Adrenal gland (tissue), 19 donors: ENCODE measurements at regions of chr22 and their contacts with region 1.

Region 1: DNA sequence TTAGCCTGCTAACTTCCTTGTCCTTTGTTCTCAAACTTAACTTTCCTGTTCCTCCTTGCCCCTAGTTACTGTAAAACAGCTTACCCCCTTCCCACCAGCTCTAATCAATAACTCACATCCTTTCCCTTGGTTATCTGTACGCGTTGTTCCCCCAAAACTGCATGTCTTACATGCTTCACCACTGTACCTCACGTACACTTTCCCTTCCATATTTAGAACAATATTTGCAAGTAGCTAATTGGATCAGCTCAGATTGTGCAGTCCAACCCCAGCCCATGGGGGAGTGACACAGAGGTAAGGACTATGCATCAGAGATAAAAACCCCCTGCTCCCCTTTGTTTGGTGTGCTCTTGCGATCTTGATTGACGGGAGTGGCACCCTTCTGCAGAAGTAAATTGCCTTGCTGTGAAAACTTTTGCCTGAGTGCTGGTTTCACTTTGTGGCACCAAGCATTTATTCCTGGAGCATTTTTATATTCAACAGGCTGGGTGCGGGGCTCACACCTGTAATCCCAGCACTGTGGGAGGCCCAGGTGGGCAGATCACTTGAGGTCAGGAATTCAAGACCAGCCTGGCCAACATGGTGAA is 30.9 kb downstream of the MIF start:
- DNase-seq: peak in 1 of 7 donors; percentile 13
- H3K4me3 ChIP-seq: no peak overlapping the region
- H3K27ac ChIP-seq: no peak overlapping the region
- H3K4me1 ChIP-seq: peaks cover 0 to 3% of the 10 kb centered on the region in 2 donors
- H3K27me3 ChIP-seq: no peaks in the 10 kb centered on the region
- CTCF ChIP-seq: no peak
- POLR2A ChIP-seq: no peak

Region 2: DNA sequence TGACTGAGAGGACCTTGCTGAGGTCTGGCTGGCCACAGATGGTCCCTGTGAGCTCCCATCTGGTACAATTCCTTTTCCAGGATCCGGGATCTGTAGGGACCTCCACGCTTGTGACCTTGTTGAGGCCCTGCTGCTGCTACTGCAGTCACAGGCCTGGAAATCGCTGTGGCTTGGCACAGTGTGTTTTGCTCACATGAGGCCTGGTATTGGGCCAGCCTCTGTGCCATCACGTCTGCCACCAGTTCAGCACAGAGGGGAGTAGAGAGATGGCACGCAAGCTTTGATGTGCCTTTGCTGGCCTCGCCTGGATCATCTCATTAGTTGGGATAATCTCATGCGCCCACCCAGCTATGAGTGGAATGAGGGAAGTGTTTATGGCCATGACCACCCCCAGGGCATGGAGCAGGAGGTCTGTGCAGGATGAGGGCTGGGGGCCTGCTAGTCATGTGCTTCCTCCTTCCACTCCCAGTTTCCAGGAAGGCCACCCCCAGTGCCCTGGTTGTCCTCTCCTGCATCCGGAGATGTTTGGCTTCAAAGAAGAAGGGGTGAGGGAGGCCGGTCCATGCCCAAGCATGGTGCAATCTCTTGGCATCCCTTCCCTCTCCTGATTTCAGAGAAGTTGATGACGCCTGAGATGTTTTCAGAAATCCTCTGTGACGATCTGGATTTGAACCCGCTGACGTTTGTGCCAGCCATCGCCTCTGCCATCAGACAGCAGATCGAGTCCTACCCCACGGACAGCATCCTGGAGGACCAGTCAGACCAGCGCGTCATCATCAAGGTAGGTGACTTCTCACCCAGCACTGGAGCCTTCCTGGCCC is 108.7 kb before region 1 on chr22:
- intact Hi-C with region 1: no loop called
- DNase-seq: peak in 1 of 7 donors; percentile 48
- H3K4me3 ChIP-seq: no peak overlapping the region
- H3K27ac ChIP-seq: no peak overlapping the region
- H3K4me1 ChIP-seq: peaks cover 0 to 13% of the 10 kb centered on the region in 2 donors
- H3K27me3 ChIP-seq: no peaks in the 10 kb centered on the region
- CTCF ChIP-seq: no peak
- POLR2A ChIP-seq: no peak

Region 3: DNA sequence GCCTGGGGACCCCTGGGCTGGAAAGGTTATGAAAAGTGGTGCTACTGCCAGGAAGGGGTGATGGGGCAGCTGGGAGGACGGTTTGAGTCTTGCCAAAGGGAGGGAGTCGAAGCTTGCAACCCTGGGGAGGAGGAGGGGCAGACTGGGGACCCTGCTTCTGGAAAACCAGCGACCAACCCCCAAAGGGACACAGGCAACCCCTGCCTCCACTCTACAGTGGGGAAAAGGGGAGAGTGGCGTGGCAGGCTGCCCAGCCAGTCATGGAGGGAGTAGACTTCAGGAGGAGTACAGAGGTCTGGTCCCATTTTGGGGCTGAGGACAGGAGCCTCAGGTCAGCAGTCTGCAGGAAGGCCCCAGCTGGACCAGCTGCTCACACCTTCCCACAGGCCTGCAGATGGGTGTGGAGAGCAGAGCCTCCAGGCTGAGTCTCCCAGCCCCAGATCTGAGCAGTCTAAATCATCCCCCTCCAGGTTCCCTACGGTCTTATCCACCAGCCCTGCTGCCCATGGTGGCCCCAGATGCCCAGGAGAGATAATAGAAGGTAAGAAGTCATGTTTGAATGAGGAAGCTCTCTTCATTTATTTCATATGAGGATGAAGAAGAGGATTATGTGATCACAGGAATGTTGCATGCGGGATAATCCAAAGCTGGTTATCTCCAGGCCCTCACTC is 45.8 kb after region 1 on chr22:
- intact Hi-C with region 1: loop called in 1 of 2 experiments (anchors 5 kb)
- DNase-seq: no peak
- H3K4me3 ChIP-seq: no peak overlapping the region
- H3K27ac ChIP-seq: no peak overlapping the region
- H3K4me1 ChIP-seq: no peaks in the 10 kb centered on the region
- H3K27me3 ChIP-seq: no peaks in the 10 kb centered on the region
- CTCF ChIP-seq: no peak
- POLR2A ChIP-seq: no peak